ENCODE measurements at regions of chr4 and their contacts with region 1.

Region 1: DNA sequence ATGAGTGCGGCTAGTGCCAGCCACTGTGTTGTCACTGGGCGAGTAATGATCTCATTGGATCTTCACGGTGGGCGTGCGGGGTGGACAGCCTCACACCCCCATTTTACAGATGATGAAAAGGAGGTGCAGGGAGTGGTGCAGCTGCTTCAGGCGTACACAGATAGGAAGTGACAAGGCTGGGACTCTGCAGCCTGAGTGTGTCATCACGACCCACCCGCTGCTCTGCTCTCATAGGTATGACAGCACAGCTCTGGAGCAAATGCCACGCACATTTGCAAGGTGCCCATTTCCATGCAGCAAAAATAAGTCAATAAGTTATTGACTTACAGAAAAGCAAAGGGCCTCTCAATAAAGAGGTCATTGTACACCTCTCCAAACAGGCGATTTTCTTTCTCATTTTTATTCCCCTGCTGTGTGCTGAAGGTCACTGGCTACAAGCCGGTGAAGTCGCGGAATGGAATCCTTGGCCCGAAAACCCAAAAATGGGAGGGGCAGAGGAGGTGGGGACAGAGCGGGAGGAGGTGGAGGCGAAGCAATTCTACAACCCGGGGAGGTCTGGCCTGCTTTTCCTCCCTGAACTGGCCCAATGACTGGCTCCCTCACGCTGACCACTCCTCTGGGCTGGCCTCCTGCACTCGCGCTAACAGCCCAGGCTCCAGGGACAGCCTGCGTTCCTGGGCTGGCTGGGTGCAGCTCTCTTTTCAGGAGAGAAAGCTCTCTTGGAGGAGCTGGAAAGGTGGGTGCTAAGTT is at the start of gene SOD3:
- DNase-seq: peak in 1 of 2 donors; percentile 46
- H3K4me3 ChIP-seq: peak within 1 kb of the TSS; percentile 24 to 48 (median 35)
- H3K27ac ChIP-seq: peak within 1 kb of the TSS; percentile 70 to 85
- H3K4me1 ChIP-seq: no peaks in the 10 kb centered on the region
- H3K27me3 ChIP-seq: peaks cover 0 to 14% of the 10 kb centered on the region in 2 donors
- CTCF ChIP-seq: no peak
- POLR2A ChIP-seq: no peak
- total RNA-seq, gene SOD3: 22.0 to 131 (median 77.3) TPM

Region 2: GRCh38 chr4:24772061-24772705 is 22.9 kb before region 1 on chr4:
- intact Hi-C with region 1: loop called (anchors 2 kb)
- DNase-seq: peak in 1 of 2 donors; percentile 68
- H3K4me3 ChIP-seq: no peak overlapping the region
- H3K27ac ChIP-seq: no peak overlapping the region
- H3K4me1 ChIP-seq: no peaks in the 10 kb centered on the region
- H3K27me3 ChIP-seq: no peaks in the 10 kb centered on the region
- CTCF ChIP-seq: no peak
- POLR2A ChIP-seq: no peak

Region 3: GRCh38 chr4:24826908-24827307 is 31.8 kb after region 1 on chr4:
- intact Hi-C with region 1: loop called (anchors 2 kb)
- DNase-seq: no peak
- H3K4me3 ChIP-seq: no peak overlapping the region
- H3K27ac ChIP-seq: no peak overlapping the region
- H3K4me1 ChIP-seq: no peaks in the 10 kb centered on the region
- H3K27me3 ChIP-seq: no peaks in the 10 kb centered on the region
- CTCF ChIP-seq: no peak
- POLR2A ChIP-seq: no peak

Region 4: DNA sequence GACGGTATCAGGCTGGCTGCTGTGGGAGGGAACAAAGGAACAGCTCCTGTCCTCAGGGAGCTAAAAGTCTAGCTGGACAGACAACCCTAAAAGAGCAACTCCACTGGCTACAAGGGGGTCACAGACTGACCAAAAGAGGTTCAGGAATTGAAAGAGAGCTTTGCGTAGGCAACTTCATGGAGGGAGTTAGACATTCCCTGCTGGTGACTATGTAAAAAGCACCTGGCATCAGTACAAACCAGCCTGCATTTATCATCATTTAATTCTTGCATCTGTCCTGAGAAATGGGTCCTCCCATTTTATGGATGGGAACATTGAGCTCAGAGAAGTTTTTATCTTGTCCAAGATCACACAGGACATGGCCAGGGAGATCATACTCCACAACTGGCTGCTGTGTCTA is 237.0 kb after region 1 on chr4:
- intact Hi-C with region 1: no loop called
- DNase-seq: no peak
- H3K4me3 ChIP-seq: no peak overlapping the region
- H3K27ac ChIP-seq: no peak overlapping the region
- H3K4me1 ChIP-seq: peaks cover 0 to 5% of the 10 kb centered on the region in 2 donors
- H3K27me3 ChIP-seq: peaks cover 0 to 20% of the 10 kb centered on the region in 2 donors
- CTCF ChIP-seq: no peak
- POLR2A ChIP-seq: no peak

Region 5: DNA sequence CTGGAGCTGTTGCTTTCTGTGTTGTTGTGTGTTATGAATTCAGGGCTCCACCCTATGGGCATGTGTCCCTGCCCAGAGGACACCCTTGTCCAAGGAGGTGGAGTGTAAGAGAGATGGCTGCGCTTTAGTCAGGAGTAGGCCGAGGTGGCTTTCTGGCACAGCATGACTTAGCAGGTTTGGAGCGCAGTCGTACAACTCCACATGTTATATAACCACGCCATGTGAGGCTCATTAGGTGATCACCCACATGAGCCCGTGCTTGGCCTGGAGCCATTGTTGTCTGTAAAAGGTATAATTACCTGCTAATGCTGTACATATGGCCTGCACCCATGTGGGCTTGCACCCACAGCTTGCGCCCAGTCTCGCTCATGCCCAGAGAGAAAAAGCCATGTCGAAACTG is 566.2 kb after region 1 on chr4:
- intact Hi-C with region 1: loop called (anchors 5 kb)
- DNase-seq: no peak
- H3K4me3 ChIP-seq: no peak overlapping the region
- H3K27ac ChIP-seq: no peak overlapping the region
- H3K4me1 ChIP-seq: no peaks in the 10 kb centered on the region
- H3K27me3 ChIP-seq: no peaks in the 10 kb centered on the region
- CTCF ChIP-seq: no peak
- POLR2A ChIP-seq: no peak

Measured in breast epithelium (tissue), 4 donors.